ENCODE measurements at regions of chr9 and their contacts with region 1.

Region 1: GRCh38 chr9:15295761-15296405 is 11.1 kb downstream of the TTC39B start:
- DNase-seq: no peak
- ATAC-seq: peak; percentile 32
- H3K4me3 Mint-ChIP-seq: peak overlapping the region; percentile 71
- H3K27ac Mint-ChIP-seq: peak overlapping the region; percentile 93
- H3K4me1 Mint-ChIP-seq: peaks cover 77% of the 10 kb centered on the region
- H3K27me3 Mint-ChIP-seq: no peaks in the 10 kb centered on the region

Region 2: DNA sequence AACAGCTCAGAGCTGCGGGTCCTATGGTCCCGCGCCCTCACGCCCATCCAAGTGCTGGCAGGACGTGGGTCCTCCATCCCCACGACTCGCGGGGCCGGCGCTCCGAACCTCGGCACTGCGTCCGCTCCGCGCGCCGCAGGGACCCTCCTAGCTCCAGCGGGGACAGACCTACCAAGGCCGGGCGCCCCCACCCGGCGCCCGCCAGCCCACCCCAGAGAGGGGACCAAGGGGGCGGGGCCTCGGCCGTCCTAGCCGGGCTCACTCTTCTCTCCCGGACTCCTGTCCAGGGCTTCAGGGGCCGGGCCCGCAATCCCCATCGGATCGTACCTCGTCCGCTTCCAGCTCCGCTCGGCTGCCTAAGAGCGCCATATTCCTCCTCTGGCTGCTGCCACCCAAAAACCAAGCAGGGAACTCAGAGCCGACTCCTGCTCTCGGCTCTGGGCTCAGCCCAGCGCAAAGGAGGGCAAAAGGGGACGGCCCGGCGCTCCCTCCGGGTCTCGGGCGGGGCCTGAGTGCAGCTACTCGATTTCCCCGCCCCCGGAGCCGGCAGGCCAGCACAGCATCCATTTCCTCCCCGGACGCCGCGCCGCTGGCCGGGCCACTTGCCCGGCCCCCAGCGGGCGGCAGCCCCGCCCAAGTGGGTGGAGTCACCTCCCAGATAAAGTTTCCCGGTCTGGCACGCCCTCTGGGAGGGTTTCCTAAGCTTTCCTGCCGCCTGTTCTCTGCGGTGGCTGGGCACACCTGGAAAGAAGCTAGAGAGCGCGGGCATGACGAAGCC is 11.1 kb after region 1 on chr9 and contains the start of gene TTC39B:
- CTCF ChIA-PET with region 1: interaction called, 43 read pairs
- POLR2A ChIA-PET with region 1: interaction called, 20 read pairs
- DNase-seq: peak; percentile 89
- ATAC-seq: peak; percentile 91
- H3K4me3 Mint-ChIP-seq: peak within 1 kb of the TSS; percentile 99
- H3K27ac Mint-ChIP-seq: peak within 1 kb of the TSS; percentile 95
- H3K4me1 Mint-ChIP-seq: peaks cover 51% of the 10 kb centered on the region
- H3K27me3 Mint-ChIP-seq: no peaks in the 10 kb centered on the region
- total RNA-seq, gene TTC39B: 17.8 to 20.3 TPM

Region 3: DNA sequence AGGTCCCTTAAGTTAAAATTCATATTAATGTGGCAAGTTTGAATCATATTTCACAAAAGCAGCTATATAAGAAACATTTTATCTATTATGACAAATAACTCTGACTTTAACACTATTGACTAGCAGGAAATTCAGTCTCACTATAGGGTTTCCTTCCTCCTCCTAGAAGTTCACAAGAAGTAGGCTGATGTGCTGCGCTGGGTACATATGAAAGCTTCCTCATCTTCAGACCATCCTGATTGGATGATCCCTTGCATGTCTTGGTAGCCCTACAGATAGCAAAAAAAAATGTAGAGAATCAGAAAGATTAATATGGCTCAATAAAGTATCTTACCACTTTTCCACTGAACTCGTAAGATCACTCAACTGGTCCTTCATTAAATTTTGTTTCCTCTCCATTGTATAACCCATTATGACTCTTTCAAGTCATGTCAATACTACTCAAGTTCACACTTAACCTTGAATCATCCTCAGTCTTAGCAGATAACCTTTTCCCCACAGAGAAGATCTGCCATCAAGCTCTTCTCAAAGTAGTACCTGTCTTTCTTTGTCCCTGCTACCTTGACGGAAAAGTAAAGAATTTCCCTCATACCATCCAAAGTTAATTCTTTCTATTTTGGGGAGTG is 226.4 kb after region 1 on chr9:
- CTCF ChIA-PET with region 1: no interaction called
- POLR2A ChIA-PET with region 1: no interaction called
- DNase-seq: no peak
- ATAC-seq: no peak
- H3K4me3 Mint-ChIP-seq: no peak overlapping the region
- H3K27ac Mint-ChIP-seq: no peak overlapping the region
- H3K4me1 Mint-ChIP-seq: no peaks in the 10 kb centered on the region
- H3K27me3 Mint-ChIP-seq: peaks cover 3% of the 10 kb centered on the region

Measured in activated CD8-positive, alpha-beta T cell treated with anti-CD3 and anti-CD28 coated beads, Interleukin-2, amount 10 ng/mL, durations not matched to agents 7 days and 5 days (primary cell).